Head of caudate nucleus (tissue), 42 donors: ENCODE measurements at regions of chr22 and their contacts with region 1.

Region 1: GRCh38 chr22:38317122-38317994 is at the start of gene CSNK1E:
- DNase-seq: peak; percentile 61 to 94 (median 86)

Region 2: GRCh38 chr22:38167988-38168431 is 149.3 kb before region 1 on chr22:
- intact Hi-C with region 1: no loop called
- DNase-seq: peak in 18 of 42 donors; percentile 20 to 79 (median 49)

Region 3: DNA sequence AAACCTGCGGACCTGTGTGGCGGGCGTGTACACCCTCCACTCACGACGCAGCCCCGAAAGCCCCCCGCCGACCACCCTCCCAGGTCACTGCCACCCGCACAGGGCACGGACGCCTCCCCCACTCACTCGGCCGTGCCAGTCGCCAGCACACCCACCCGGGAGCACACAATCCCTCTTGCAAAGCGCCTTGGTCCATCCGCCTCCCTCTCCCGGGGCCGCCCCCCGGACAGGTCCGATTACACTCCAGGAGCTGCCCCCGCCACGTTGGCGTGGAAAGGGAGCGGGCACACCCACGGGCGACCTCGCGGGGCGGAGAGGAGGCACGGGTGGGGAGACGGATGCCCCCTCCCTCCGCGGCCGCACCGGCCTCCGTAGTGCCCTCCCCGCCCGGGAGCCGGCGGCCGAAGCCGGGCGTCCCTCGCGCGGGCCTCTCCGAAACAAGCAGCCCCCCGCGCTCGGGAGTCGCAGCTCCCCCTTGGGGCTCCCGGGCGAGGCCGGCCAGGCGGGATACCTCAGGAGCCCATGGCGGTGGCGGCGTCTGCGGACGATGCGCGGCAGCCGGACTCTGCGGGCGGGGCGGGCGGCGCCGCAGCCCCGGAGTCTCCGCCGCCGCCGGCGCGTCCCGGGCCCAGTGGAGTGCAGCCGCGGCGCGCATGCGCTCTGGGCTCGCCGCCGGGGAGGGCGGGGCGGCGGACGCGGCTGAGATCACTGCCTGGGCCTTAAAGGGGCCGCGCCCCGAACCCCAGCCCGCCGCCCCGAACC is 44.8 kb before region 1 on chr22 and contains the start of gene TMEM184B:
- intact Hi-C with region 1: loop called (anchors 5 kb)
- DNase-seq: peak; percentile 44 to 91 (median 82)

Region 4: GRCh38 chr22:38429499-38430068 is 112.2 kb after region 1 on chr22:
- intact Hi-C with region 1: no loop called
- DNase-seq: peak in 33 of 42 donors; percentile 22 to 75 (median 52)